Activated T-helper 2 cell treated with anti-CD3 and anti-CD28 coated beads, Interferon-gamma antibody, Interleukin-2, Interleukin-4, amounts not matched to agents 10 μg/mL and 5 μg/mL and 100 μg/mL, durations not matched to agents 14 hours and 24 hours and 36 hours (primary cell): ENCODE measurements at regions of chr3 and their contacts with region 1.

Region 1: GRCh38 chr3:196969660-196970546 is 1.3 kb upstream of the PIGZ start:
- DNase-seq: peak; percentile 63
- H3K4me3 Mint-ChIP-seq: peak overlapping the region; percentile 80
- H3K27ac Mint-ChIP-seq: peak overlapping the region; percentile 74
- H3K4me1 Mint-ChIP-seq: peaks cover 11% of the 10 kb centered on the region
- H3K27me3 Mint-ChIP-seq: peaks cover 6% of the 10 kb centered on the region

Region 2: DNA sequence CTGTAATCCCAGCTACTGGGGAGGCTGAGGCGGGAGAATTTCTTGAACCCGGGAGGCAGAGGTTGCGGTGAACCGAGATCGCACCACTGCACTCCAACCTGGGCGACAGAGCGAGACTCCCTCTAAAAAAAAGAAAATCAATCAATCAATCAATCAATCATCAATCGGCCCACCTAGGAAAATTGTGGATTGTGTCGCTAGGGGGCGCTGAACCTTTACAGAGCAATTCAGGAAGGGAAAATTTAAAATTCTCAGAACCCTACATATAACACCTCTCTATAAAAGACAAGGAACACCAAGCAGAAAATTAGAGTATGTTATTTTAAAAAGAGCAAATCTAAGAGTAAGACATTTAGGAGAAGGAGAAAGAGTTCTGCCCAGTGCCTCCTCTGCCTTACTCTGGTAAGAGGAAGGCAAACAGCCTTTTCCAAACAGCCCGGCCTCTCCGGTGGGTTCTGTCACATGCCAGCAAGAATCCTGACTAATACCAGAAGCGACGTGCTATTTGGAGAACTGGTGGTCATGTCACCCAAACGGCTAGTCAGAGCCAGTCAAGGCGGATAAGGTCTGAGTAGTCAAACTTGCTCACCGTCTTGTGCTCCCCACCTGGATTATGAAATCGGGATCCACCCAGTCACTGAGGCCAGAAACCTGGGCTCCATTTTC is 432.5 kb before region 1 on chr3:
- intact Hi-C with region 1: loop called (anchors 10 kb)
- DNase-seq: peak; percentile 40
- H3K4me3 Mint-ChIP-seq: no peak overlapping the region
- H3K27ac Mint-ChIP-seq: no peak overlapping the region
- H3K4me1 Mint-ChIP-seq: peaks cover 9% of the 10 kb centered on the region
- H3K27me3 Mint-ChIP-seq: no peaks in the 10 kb centered on the region

Region 3: GRCh38 chr3:196585044-196585757 is 384.7 kb before region 1 on chr3:
- intact Hi-C with region 1: no loop called
- DNase-seq: no peak
- H3K4me3 Mint-ChIP-seq: no peak overlapping the region
- H3K27ac Mint-ChIP-seq: no peak overlapping the region
- H3K4me1 Mint-ChIP-seq: peaks cover 18% of the 10 kb centered on the region
- H3K27me3 Mint-ChIP-seq: no peaks in the 10 kb centered on the region

Region 4: DNA sequence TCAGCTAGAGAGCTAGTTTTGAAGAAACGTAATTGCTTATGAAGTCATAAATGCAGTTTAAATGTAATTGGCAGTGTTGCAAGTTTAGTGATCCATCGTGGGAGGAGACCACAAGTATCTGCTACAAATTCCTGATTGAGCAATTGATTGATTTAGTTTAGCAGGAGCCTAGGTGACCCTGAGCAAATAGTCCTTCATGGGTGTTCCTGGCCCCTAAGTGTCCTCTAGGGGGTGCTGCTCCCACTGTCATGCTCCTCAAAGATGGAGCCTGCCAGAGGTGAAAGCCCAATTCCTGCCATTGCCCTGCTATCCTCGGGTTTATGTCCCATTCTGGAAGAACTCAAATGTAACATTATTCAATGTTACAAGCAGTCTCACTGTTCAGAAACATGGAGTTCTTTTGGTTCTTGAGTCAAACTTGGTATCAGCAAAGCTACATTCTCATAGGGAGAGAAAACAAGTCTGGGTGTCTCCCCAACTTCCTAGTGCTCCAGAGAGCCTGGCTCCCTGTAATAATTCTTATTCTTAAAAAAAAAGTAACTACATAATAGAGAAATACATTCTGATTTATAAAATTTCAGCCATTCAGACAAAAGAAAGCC is 132.0 kb before region 1 on chr3:
- intact Hi-C with region 1: loop called (anchors 1 kb)
- DNase-seq: peak; percentile 61
- H3K4me3 Mint-ChIP-seq: no peak overlapping the region
- H3K27ac Mint-ChIP-seq: no peak overlapping the region
- H3K4me1 Mint-ChIP-seq: peaks cover 3% of the 10 kb centered on the region
- H3K27me3 Mint-ChIP-seq: no peaks in the 10 kb centered on the region